Activated T-helper 2 cell treated with anti-CD3 and anti-CD28 coated beads, Interferon-gamma antibody, Interleukin-2, Interleukin-4, amounts not matched to agents 10 μg/mL and 5 μg/mL and 100 μg/mL, durations not matched to agents 14 hours and 24 hours and 36 hours (primary cell): ENCODE measurements at regions of chr3 and their contacts with region 1.

Region 1: GRCh38 chr3:196528639-196529233 is 13.6 kb upstream of the SMCO1 start:
- DNase-seq: peak; percentile 78
- H3K4me3 Mint-ChIP-seq: peak overlapping the region; percentile 72
- H3K27ac Mint-ChIP-seq: peak overlapping the region; percentile 88
- H3K4me1 Mint-ChIP-seq: peaks cover 12% of the 10 kb centered on the region
- H3K27me3 Mint-ChIP-seq: no peaks in the 10 kb centered on the region

Region 2: GRCh38 chr3:196486263-196486662 is 42.5 kb before region 1 on chr3:
- intact Hi-C with region 1: loop called (anchors 5 kb)
- DNase-seq: no peak
- H3K4me3 Mint-ChIP-seq: no peak overlapping the region
- H3K27ac Mint-ChIP-seq: peak overlapping the region; percentile 49
- H3K4me1 Mint-ChIP-seq: peaks cover 13% of the 10 kb centered on the region
- H3K27me3 Mint-ChIP-seq: no peaks in the 10 kb centered on the region

Region 3: GRCh38 chr3:196554205-196554604 is 25.5 kb after region 1 on chr3:
- intact Hi-C with region 1: no loop called
- DNase-seq: no peak
- H3K4me3 Mint-ChIP-seq: no peak overlapping the region
- H3K27ac Mint-ChIP-seq: no peak overlapping the region
- H3K4me1 Mint-ChIP-seq: peaks cover 12% of the 10 kb centered on the region
- H3K27me3 Mint-ChIP-seq: no peaks in the 10 kb centered on the region

Region 4: GRCh38 chr3:196568246-196569002 is 39.7 kb after region 1 on chr3 and contains the starts of genes FBXO45 and WDR53:
- intact Hi-C with region 1: loop called (anchors 2 kb)
- DNase-seq: peak; percentile 95
- H3K4me3 Mint-ChIP-seq: peak within 1 kb of the TSS; percentile 94
- H3K27ac Mint-ChIP-seq: peak within 1 kb of the TSS; percentile 89
- H3K4me1 Mint-ChIP-seq: peaks cover 37% of the 10 kb centered on the region
- H3K27me3 Mint-ChIP-seq: no peaks in the 10 kb centered on the region
- total RNA-seq, gene FBXO45: 22.4 and 23.0 TPM in 2 replicates
- total RNA-seq, gene WDR53: 16.5 and 17.4 TPM in 2 replicates

Region 5: GRCh38 chr3:196632046-196632751 is 103.5 kb after region 1 on chr3:
- intact Hi-C with region 1: loop called (anchors 2 kb)
- DNase-seq: peak; percentile 97
- H3K4me3 Mint-ChIP-seq: peak overlapping the region; percentile 87
- H3K27ac Mint-ChIP-seq: peak overlapping the region; percentile 97
- H3K4me1 Mint-ChIP-seq: peaks cover 54% of the 10 kb centered on the region
- H3K27me3 Mint-ChIP-seq: no peaks in the 10 kb centered on the region

Region 6: DNA sequence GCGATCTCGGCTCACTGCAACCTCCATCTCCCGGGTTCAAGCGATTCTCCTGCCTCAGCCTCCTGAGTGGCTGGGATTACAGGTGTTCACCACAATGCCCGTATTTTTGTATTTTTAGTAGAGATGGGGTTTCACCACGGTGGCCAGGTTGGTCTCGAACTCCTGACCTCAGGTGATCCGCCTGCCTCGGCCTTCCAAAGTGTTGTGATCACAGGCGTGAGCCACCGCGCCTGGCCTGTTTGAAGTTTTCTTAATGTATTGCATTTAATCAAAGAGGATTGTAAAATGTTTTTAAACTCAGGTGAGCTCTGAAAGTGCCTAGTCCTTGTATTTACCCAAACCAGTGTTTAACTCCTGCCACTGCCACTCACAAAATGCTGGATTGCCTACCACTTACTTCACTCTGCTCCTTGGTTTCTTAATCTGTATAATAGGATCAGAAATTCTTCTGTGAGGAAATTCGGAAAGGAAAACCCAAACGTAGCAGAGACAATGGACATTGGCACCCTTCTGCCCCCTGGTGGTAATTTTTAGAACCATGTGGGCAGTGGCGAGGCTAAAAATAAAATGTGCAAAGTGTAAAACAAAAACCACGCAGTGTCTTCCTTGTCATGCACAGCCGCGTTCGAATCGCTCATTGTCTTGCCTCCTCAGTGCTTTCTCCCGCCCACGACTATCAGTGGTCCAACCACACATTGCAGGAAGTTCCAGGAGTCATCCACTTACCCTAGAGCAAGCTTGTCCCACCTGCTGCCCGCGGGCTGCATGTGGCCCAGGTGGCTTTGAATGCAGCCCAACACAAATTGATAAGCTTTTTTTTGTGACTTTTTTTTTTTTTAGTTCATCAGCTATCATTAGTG is 156.0 kb after region 1 on chr3:
- intact Hi-C with region 1: loop called (anchors 2 kb)
- DNase-seq: peak; percentile 61
- H3K4me3 Mint-ChIP-seq: peak overlapping the region; percentile 40
- H3K27ac Mint-ChIP-seq: peak overlapping the region; percentile 47
- H3K4me1 Mint-ChIP-seq: peaks cover 30% of the 10 kb centered on the region
- H3K27me3 Mint-ChIP-seq: no peaks in the 10 kb centered on the region